ENCODE measurements at regions of chr2 and their contacts with region 1.

Region 1: GRCh38 chr2:189412330-189412953 is 28.8 kb upstream of the WDR75 start:
- DNase-seq: peak; percentile 74
- ATAC-seq: peak; percentile 70
- H3K4me3 ChIP-seq: no peak overlapping the region
- H3K27ac ChIP-seq: peak overlapping the region; percentile 81; the same call in 1 of the 2 replicates
- H3K4me1 ChIP-seq: peaks cover 14% of the 10 kb centered on the region
- H3K27me3 ChIP-seq: no peaks in the 10 kb centered on the region
- CTCF ChIP-seq: peak; percentile 80
- POLR2A ChIP-seq: no peak
- RAD21 ChIP-seq: peak; percentile 88

Region 2: DNA sequence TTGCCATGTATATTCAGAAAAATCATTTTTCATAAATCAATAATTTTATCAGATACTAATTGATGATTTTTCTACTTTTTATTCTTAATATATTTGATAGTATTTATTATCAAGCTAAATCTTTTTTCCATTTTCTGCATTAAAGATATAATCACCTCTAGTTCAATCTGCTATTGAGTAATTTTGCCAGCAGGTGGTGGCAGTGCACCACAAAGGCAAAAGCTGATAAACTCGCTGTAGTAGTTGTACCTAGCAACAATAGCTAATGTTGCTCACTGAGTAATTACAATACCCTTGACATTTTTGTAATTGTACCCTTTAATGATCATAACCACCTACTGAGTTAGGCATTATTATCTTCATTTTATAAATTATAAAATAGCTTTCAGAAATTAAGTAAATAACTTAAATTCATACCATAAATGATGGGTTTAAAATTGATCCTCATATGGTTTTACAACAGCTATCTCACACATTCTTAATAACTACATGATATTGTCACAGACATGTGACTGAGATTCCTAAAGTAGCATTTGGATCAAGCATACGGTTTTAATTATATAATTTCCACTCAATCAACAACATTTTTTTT is 1912.4 kb before region 1 on chr2:
- CTCF ChIA-PET with region 1: no interaction called
- POLR2A ChIA-PET with region 1: no interaction called
- dilution Hi-C with region 1: no loop called
- in situ Hi-C with region 1: loop called (anchors 10 kb)
- intact Hi-C with region 1: loop called (anchors 2 kb)
- DNase-seq: peak; percentile 66
- ATAC-seq: peak; percentile 71
- H3K4me3 ChIP-seq: no peak overlapping the region
- H3K27ac ChIP-seq: no peak overlapping the region
- H3K4me1 ChIP-seq: peaks cover 9% of the 10 kb centered on the region
- H3K27me3 ChIP-seq: no peaks in the 10 kb centered on the region
- CTCF ChIP-seq: peak; percentile 94
- POLR2A ChIP-seq: 0 out of 2 replicates have a peak, but pooled peaks have one; percentile 30
- RAD21 ChIP-seq: peak; percentile 96

Region 3: DNA sequence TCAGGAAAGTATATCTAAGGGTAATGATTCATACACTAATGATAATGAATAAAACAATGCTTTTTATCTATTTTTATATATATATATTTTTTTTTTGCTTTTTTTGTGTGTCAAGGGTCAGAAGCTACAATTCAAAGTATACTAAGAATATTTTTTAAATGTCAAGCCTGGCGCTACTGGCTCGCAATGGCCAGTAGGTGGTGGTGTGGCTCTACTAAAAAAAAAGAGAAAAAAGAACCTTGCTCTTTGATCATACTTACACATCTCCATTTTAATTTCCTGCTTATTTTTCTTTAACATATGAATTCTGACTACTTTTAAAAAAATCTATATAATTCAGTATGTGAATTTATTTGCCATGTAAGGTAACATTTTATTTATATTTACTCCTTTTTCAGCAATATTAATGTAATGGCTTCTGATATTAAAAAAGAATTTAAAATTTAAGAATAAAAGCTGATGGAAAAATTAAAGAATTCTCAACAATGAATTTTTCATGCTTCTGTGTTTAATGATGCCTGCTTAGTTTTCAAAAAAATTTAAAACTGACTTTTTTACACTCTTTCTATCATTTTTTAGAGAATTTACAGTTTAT is 887.8 kb before region 1 on chr2:
- CTCF ChIA-PET with region 1: interaction called, 6 read pairs
- POLR2A ChIA-PET with region 1: no interaction called
- dilution Hi-C with region 1: no loop called
- in situ Hi-C with region 1: loop called (anchors 5 kb)
- intact Hi-C with region 1: loop called (anchors 1 kb)
- DNase-seq: peak; percentile 69
- ATAC-seq: peak; percentile 69; the same call in 1 of the 2 replicates
- H3K4me3 ChIP-seq: no peak overlapping the region
- H3K27ac ChIP-seq: no peak overlapping the region
- H3K4me1 ChIP-seq: peaks cover 2% of the 10 kb centered on the region; the same call in 1 of the 2 replicates
- H3K27me3 ChIP-seq: no peaks in the 10 kb centered on the region
- CTCF ChIP-seq: peak; percentile 85
- POLR2A ChIP-seq: no peak
- RAD21 ChIP-seq: peak; percentile 80

Region 4: GRCh38 chr2:189014449-189015138 is 397.8 kb before region 1 on chr2:
- CTCF ChIA-PET with region 1: no interaction called
- POLR2A ChIA-PET with region 1: interaction called, 4 read pairs
- dilution Hi-C with region 1: no loop called
- in situ Hi-C with region 1: no loop called
- intact Hi-C with region 1: loop called (anchors 5 kb)
- DNase-seq: peak; percentile 76
- ATAC-seq: peak; percentile 43
- H3K4me3 ChIP-seq: no peak overlapping the region
- H3K27ac ChIP-seq: peak overlapping the region; percentile 77
- H3K4me1 ChIP-seq: peaks cover 9% of the 10 kb centered on the region; the same call in 1 of the 2 replicates
- H3K27me3 ChIP-seq: no peaks in the 10 kb centered on the region
- CTCF ChIP-seq: no peak
- POLR2A ChIP-seq: no peak
- RAD21 ChIP-seq: no peak

Region 5: DNA sequence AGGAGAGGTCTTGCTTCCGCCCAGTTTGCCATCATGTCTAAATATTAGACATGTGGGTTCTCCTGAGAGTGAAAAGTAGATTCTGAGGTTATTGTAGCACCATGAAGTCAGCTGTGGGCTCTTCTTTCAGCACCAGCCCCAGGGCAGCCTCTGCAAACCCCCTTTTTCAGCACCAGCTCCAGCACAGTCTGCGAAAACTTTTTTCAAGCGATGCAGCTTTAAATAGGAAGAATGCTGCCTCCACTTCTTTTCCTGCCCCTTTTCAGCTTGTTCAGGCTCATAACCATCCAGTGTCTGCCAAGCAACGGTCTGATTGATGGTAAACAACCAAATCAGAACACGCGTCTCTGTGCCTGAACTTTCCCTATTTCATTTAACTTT is 232.9 kb before region 1 on chr2 and contains the start of gene COL5A2:
- CTCF ChIA-PET with region 1: no interaction called
- POLR2A ChIA-PET with region 1: interaction called, 3 read pairs
- dilution Hi-C with region 1: no loop called
- in situ Hi-C with region 1: loop called (anchors 5 kb)
- intact Hi-C with region 1: loop called (anchors 1 kb)
- DNase-seq: peak; percentile 91
- ATAC-seq: peak; percentile 79
- H3K4me3 ChIP-seq: peak within 1 kb of the TSS; percentile 96
- H3K27ac ChIP-seq: peak within 1 kb of the TSS; percentile 87
- H3K4me1 ChIP-seq: peaks cover 2% of the 10 kb centered on the region; the same call in 1 of the 2 replicates
- H3K27me3 ChIP-seq: no peaks in the 10 kb centered on the region
- CTCF ChIP-seq: no peak
- POLR2A ChIP-seq: peak; percentile 80
- RAD21 ChIP-seq: peak; percentile 41
- total RNA-seq, gene COL5A2: 235 and 257 TPM in 2 replicates

Region 6: DNA sequence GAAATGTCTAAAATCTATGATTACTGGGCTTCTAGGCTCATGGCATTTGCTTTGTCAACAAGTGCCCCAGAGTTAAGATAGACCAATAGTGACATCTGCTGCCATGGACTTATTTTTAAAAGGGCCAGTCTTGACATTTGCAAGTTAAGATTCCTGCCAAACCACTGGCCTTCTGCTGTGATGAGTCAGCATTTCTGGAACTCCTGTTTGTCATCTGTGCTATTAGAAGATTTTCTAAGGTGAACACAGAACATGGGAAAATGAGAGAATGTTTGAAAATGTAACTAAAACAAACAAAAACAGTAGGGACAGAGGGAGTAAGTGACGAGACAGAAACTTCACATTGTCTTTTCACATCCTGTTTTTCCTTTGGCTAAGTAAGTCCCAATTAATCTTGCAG is 64.9 kb before region 1 on chr2:
- CTCF ChIA-PET with region 1: interaction called, 6 read pairs
- POLR2A ChIA-PET with region 1: no interaction called
- dilution Hi-C with region 1: no loop called
- in situ Hi-C with region 1: no loop called
- intact Hi-C with region 1: loop called (anchors 1 kb)
- DNase-seq: peak; percentile 96
- ATAC-seq: peak; percentile 90
- H3K4me3 ChIP-seq: no peak overlapping the region
- H3K27ac ChIP-seq: peak overlapping the region; percentile 89; the same call in 1 of the 2 replicates
- H3K4me1 ChIP-seq: peaks cover 8% of the 10 kb centered on the region
- H3K27me3 ChIP-seq: no peaks in the 10 kb centered on the region
- CTCF ChIP-seq: peak; percentile 65
- POLR2A ChIP-seq: no peak
- RAD21 ChIP-seq: peak; percentile 89

Region 7: DNA sequence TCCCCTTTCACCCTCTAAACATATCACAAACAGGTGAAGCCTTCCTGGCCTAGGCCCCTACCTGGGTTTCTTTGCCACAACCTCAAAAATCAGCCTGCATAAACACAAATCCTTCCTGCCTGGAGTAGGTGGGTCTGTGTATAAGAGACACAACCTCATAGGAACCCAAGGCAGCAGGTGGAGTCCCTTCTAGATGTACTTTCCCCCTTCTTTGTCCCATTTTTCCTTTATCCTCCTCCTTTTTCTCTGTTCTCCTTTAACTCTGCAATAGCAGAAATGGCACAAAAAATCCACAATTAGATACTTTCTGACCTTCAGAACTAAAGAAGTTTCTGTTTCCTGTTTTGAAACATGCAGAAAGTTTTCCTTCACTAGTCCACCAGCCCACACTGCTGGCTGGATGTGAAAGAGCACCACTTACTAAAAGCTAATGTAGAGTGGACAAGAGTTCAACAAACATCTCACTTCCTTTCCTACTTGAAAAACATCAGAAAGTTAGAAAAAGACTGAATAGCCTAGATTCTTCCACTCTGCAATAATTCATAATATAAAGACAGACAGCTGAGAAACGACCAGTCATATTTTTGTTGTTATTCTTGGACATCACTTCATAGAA is 157.0 kb after region 1 on chr2:
- CTCF ChIA-PET with region 1: no interaction called
- POLR2A ChIA-PET with region 1: no interaction called
- dilution Hi-C with region 1: no loop called
- in situ Hi-C with region 1: no loop called
- intact Hi-C with region 1: no loop called
- DNase-seq: peak; percentile 34
- ATAC-seq: 0 out of 2 replicates have a peak, but pooled peaks have one; percentile 33
- H3K4me3 ChIP-seq: no peak overlapping the region
- H3K27ac ChIP-seq: no peak overlapping the region
- H3K4me1 ChIP-seq: peaks cover 7% of the 10 kb centered on the region
- H3K27me3 ChIP-seq: no peaks in the 10 kb centered on the region
- CTCF ChIP-seq: 0 out of 2 replicates have a peak, but pooled peaks have one; percentile 16
- POLR2A ChIP-seq: no peak
- RAD21 ChIP-seq: no peak

Region 8: DNA sequence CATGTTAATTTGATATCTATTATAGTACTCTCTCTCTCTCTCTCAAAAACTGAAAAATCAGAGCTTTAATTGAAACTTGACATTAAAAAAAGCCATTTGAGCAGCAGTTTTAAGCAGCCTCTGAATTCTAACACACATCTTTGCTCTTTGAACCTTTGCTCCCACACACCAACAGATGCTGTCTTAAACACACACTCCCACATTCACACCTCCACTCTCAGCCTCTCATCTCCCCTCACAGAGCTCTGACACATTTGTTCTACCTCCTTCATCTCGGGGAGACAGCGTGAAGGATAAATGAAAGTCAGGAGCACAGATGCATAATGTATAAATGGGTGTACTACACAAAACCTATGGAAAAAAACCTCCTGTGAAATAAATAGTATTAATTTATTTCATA is 1331.6 kb after region 1 on chr2:
- CTCF ChIA-PET with region 1: no interaction called
- POLR2A ChIA-PET with region 1: no interaction called
- dilution Hi-C with region 1: no loop called
- in situ Hi-C with region 1: no loop called
- intact Hi-C with region 1: no loop called
- DNase-seq: no peak
- ATAC-seq: no peak
- H3K4me3 ChIP-seq: no peak overlapping the region
- H3K27ac ChIP-seq: no peak overlapping the region
- H3K4me1 ChIP-seq: peaks cover 2% of the 10 kb centered on the region; the same call in 1 of the 2 replicates
- H3K27me3 ChIP-seq: peaks cover 3% of the 10 kb centered on the region
- CTCF ChIP-seq: no peak
- POLR2A ChIP-seq: no peak
- RAD21 ChIP-seq: no peak

Measured in IMR-90 (cell line).